ENCODE measurements at regions of chr1 and their contacts with region 1.

Region 1: GRCh38 chr1:158203693-158204457 is 23.2 kb downstream of the CD1D start:
- DNase-seq: peak; percentile 8
- ATAC-seq: peak; percentile 92
- H3K4me3 ChIP-seq: no peak overlapping the region
- H3K27ac ChIP-seq: no peak overlapping the region
- H3K4me1 ChIP-seq: no peaks in the 10 kb centered on the region
- H3K27me3 ChIP-seq: no peaks in the 10 kb centered on the region
- CTCF ChIP-seq: peak; percentile 56 to 70 (median 56); a peak in 5 of 6 replicates
- EP300 ChIP-seq: no peak
- POLR2A ChIP-seq: no peak
- RAD21 ChIP-seq: peak; percentile 68

Region 2: DNA sequence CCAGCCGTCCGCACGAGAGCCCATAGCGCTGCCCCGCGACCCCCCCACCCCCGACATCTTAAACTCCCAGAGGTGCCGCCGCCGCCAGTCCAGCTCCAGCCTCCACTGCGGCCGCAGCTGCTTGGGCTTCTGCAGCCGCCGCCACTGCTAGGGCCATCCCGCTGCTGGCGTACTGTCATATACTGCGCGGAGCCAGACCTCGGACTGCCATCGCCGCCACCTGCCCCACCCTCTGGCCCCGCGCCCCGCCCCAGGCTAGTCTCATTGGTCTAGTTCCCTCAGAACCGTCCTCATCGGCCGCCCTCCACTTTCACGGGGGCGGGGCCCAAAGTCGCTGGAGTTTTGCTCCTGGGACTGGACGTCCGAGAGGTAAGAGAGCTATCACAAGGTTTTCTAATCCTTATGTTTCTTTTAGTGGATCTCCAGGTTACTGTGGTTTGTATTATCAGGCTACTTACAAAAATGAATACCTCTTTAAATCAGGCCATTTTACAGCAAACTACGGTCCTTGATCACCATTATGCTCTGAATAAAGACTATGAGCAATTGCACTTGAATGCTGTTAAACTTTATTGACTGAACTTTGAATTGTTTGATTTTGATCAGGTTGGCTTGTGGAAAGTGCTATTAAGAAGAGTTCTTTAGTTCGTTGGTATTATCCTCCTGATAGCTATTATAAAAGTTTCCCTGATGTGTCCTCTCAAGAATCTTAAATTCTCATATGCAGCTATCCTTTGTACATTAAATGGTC is 26.0 kb before region 1 on chr1:
- CTCF ChIA-PET with region 1: interaction called, 10 read pairs
- POLR2A ChIA-PET with region 1: no interaction called
- RAD21 ChIA-PET with region 1: interaction called, 7 read pairs
- SMC1A ChIA-PET with region 1: interaction called, 3 read pairs
- in situ Hi-C with region 1: no loop called
- intact Hi-C with region 1: no loop called
- DNase-seq: no peak
- ATAC-seq: no peak
- H3K4me3 ChIP-seq: no peak overlapping the region
- H3K27ac ChIP-seq: no peak overlapping the region
- H3K4me1 ChIP-seq: peaks cover 31% of the 10 kb centered on the region
- H3K27me3 ChIP-seq: peaks cover 10 to 22% of the 10 kb centered on the region in 2 experiments
- CTCF ChIP-seq: no peak
- EP300 ChIP-seq: no peak
- POLR2A ChIP-seq: no peak
- RAD21 ChIP-seq: no peak

Region 3: DNA sequence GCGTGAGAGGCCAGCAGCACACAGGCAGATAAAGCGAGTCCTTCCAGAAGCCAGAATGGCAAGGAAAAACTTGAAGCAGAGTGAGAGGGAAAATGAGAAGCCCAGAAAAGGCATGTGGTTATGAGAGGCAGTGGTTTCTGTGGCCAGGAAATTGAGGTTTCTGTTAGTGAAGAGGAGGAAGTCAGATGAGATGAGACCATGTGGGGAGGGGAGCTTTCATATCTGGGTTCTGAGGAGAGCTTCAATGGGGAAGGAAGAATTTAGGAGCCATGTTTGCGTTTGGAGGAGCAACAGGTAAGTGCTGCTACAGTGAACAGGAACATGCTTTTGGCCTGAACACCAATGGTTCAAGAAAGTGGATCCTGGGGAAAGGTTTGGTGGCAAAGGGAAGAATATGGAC is 44.2 kb after region 1 on chr1:
- CTCF ChIA-PET with region 1: interaction called, 24 read pairs
- POLR2A ChIA-PET with region 1: no interaction called
- RAD21 ChIA-PET with region 1: interaction called, 4 read pairs
- SMC1A ChIA-PET with region 1: interaction called, 4 read pairs
- in situ Hi-C with region 1: no loop called
- intact Hi-C with region 1: no loop called
- DNase-seq: peak; percentile 13
- ATAC-seq: peak; percentile 71
- H3K4me3 ChIP-seq: no peak overlapping the region
- H3K27ac ChIP-seq: no peak overlapping the region
- H3K4me1 ChIP-seq: peaks cover 9% of the 10 kb centered on the region
- H3K27me3 ChIP-seq: no peaks in the 10 kb centered on the region
- CTCF ChIP-seq: no peak
- EP300 ChIP-seq: no peak
- POLR2A ChIP-seq: no peak
- RAD21 ChIP-seq: no peak

Region 4: GRCh38 chr1:158324395-158324794 is 120.5 kb after region 1 on chr1:
- CTCF ChIA-PET with region 1: interaction called, 267 read pairs
- POLR2A ChIA-PET with region 1: interaction called, 6 read pairs
- RAD21 ChIA-PET with region 1: interaction called, 179 read pairs
- SMC1A ChIA-PET with region 1: interaction called, 172 read pairs
- in situ Hi-C with region 1: no loop called
- intact Hi-C with region 1: loop called (anchors 1 kb)
- DNase-seq: no peak
- ATAC-seq: peak; percentile 47
- H3K4me3 ChIP-seq: no peak overlapping the region
- H3K27ac ChIP-seq: no peak overlapping the region
- H3K4me1 ChIP-seq: peaks cover 9% of the 10 kb centered on the region
- H3K27me3 ChIP-seq: no peaks in the 10 kb centered on the region
- CTCF ChIP-seq: no peak
- EP300 ChIP-seq: no peak; a peak in 1 of 4 replicates
- POLR2A ChIP-seq: no peak
- RAD21 ChIP-seq: no peak

Region 5: GRCh38 chr1:158496374-158496773 is 292.5 kb after region 1 on chr1:
- CTCF ChIA-PET with region 1: interaction called, 64 read pairs
- POLR2A ChIA-PET with region 1: no interaction called
- RAD21 ChIA-PET with region 1: interaction called, 26 read pairs
- SMC1A ChIA-PET with region 1: interaction called, 54 read pairs
- in situ Hi-C with region 1: no loop called
- intact Hi-C with region 1: loop called (anchors 1 kb)
- DNase-seq: no peak
- ATAC-seq: peak; percentile 55; the same call in 2 of the 3 replicates
- H3K4me3 ChIP-seq: no peak overlapping the region
- H3K27ac ChIP-seq: no peak overlapping the region
- H3K4me1 ChIP-seq: no peaks in the 10 kb centered on the region
- H3K27me3 ChIP-seq: 0 out of 4 replicates have a peak, but pooled peaks cover 0 to 3% of the 10 kb centered on the region in 2 experiments
- CTCF ChIP-seq: peak; percentile 24 to 47 (median 27); a peak in 4 of 6 replicates
- EP300 ChIP-seq: no peak
- POLR2A ChIP-seq: no peak
- RAD21 ChIP-seq: peak; percentile 60

Region 6: DNA sequence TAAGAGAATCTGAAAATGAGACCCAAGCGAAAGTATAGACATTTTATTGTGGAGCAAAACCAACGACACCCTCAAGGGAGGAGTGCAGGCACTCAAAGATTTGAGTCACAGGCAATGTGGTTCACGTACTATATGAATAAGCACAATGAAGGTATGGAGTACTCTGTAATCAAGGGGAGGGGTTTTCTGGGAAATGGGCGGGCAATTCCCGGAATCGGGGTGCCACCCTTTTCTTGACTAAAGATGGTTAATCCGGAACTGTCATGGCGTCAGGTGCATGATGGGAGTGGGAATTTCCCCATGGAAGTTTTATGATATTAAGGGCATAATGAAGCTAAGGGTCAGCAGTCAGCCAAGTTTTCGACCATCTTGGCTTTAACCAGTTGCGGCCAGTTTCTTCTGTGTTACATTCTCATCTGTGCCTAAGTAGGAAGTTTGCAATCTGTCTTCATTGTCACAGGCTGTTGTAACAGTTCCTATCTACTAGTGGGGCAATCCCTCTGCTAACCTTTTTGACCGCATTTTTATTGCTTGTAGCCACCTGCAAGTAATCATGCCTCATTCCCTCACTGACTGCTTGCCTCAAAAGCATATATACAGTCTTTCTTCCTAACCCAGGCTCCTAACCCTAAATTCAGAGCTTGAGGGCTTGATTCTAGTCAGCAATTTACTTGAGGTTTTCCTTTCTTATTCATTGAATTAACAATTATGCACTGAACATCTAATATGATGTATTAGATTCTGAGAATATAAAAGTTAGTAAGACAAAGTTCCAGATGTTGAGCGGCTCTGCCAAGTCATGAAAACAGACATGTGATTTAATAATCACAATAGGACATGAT is 873.5 kb after region 1 on chr1:
- CTCF ChIA-PET with region 1: interaction called, 21 read pairs
- POLR2A ChIA-PET with region 1: no interaction called
- RAD21 ChIA-PET with region 1: interaction called, 15 read pairs
- SMC1A ChIA-PET with region 1: interaction called, 21 read pairs
- in situ Hi-C with region 1: no loop called
- intact Hi-C with region 1: loop called (anchors 5 kb)
- DNase-seq: peak; percentile 94
- ATAC-seq: peak; percentile 74
- H3K4me3 ChIP-seq: peak overlapping the region; percentile 64
- H3K27ac ChIP-seq: peak overlapping the region; percentile 89
- H3K4me1 ChIP-seq: peaks cover 11% of the 10 kb centered on the region
- H3K27me3 ChIP-seq: no peaks in the 10 kb centered on the region
- CTCF ChIP-seq: no peak
- EP300 ChIP-seq: peak; percentile 44 to 47; a peak in 2 of 4 replicates
- POLR2A ChIP-seq: peak; percentile 56; the same call in 1 of the 2 replicates
- RAD21 ChIP-seq: no peak